ENCODE measurements at regions of chr1 and their contacts with region 1.

Region 1: DNA sequence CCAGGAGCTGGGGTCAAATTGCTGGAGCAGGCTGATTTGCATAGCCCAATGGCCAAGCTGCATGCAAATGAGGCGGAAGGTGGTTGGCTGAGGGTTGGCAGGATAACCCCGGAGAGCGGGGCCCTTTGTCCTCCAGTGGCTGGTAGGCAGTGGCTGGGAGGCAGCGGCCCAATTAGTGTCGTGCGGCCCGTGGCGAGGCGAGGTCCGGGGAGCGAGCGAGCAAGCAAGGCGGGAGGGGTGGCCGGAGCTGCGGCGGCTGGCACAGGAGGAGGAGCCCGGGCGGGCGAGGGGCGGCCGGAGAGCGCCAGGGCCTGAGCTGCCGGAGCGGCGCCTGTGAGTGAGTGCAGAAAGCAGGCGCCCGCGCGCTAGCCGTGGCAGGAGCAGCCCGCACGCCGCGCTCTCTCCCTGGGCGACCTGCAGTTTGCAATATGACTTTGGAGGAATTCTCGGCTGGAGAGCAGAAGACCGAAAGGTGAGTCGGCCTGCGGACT is at the start of gene GADD45A:
- DNase-seq: peak; percentile 90 to 99 (median 93)
- ATAC-seq: peak; percentile 80
- H3K4me3 ChIP-seq: peak within 1 kb of the TSS; percentile 93
- H3K27ac ChIP-seq: peak within 1 kb of the TSS; percentile 95
- H3K4me1 ChIP-seq: peaks cover 18 to 33% of the 10 kb centered on the region in 2 experiments; a peak in 4 of 5 replicates
- H3K27me3 ChIP-seq: no peaks in the 10 kb centered on the region
- CTCF ChIP-seq: no peak
- EP300 ChIP-seq: no peak; the same call in 1 of the 2 replicates
- POLR2A ChIP-seq: peak; percentile 99
- RAD21 ChIP-seq: peak in 1 of 2 experiments; percentile 24; a peak in 2 of 4 replicates
- polyA plus RNA-seq, gene GADD45A: 21.3 to 22.4 TPM

Region 2: GRCh38 chr1:66929999-66930822 is 754.9 kb before region 1 on chr1:
- CTCF ChIA-PET with region 1: no interaction called
- POLR2A ChIA-PET with region 1: no interaction called
- in situ Hi-C with region 1: no loop called
- intact Hi-C with region 1: loop called (anchors 5 kb)
- DNase-seq: peak; percentile 85 to 97 (median 90)
- ATAC-seq: peak; percentile 61
- H3K4me3 ChIP-seq: peak overlapping the region; percentile 85
- H3K27ac ChIP-seq: peak overlapping the region; percentile 89
- H3K4me1 ChIP-seq: peaks cover 8 to 11% of the 10 kb centered on the region in 2 experiments; a peak in 3 of 5 replicates
- H3K27me3 ChIP-seq: no peaks in the 10 kb centered on the region
- CTCF ChIP-seq: peak in 2 of 3 experiments; percentile 13 to 35; a peak in 3 of 6 replicates
- EP300 ChIP-seq: no peak
- POLR2A ChIP-seq: peak; percentile 82
- RAD21 ChIP-seq: no peak

Region 3: GRCh38 chr1:67540733-67541125 is 144.4 kb before region 1 on chr1:
- CTCF ChIA-PET with region 1: no interaction called
- POLR2A ChIA-PET with region 1: interaction called, 23 read pairs
- in situ Hi-C with region 1: no loop called
- intact Hi-C with region 1: loop called (anchors 1 kb)
- DNase-seq: no peak
- ATAC-seq: no peak
- H3K4me3 ChIP-seq: no peak overlapping the region
- H3K27ac ChIP-seq: no peak overlapping the region
- H3K4me1 ChIP-seq: peaks cover 12 to 14% of the 10 kb centered on the region in 2 experiments; a peak in 4 of 5 replicates
- H3K27me3 ChIP-seq: no peaks in the 10 kb centered on the region
- CTCF ChIP-seq: no peak
- EP300 ChIP-seq: no peak
- POLR2A ChIP-seq: no peak
- RAD21 ChIP-seq: no peak

Region 4: GRCh38 chr1:67646145-67647035 is 38.7 kb before region 1 on chr1:
- CTCF ChIA-PET with region 1: no interaction called
- POLR2A ChIA-PET with region 1: interaction called, 11 read pairs
- in situ Hi-C with region 1: no loop called
- intact Hi-C with region 1: loop called (anchors 2 kb)
- DNase-seq: peak; percentile 76 to 81 (median 80)
- ATAC-seq: peak; percentile 93
- H3K4me3 ChIP-seq: no peak overlapping the region
- H3K27ac ChIP-seq: peak overlapping the region; percentile 77
- H3K4me1 ChIP-seq: peaks cover 19 to 25% of the 10 kb centered on the region in 2 experiments
- H3K27me3 ChIP-seq: no peaks in the 10 kb centered on the region
- CTCF ChIP-seq: no peak
- EP300 ChIP-seq: peak; percentile 63
- POLR2A ChIP-seq: no peak
- RAD21 ChIP-seq: peak in 1 of 2 experiments; percentile 34; a peak in 2 of 4 replicates

Region 5: DNA sequence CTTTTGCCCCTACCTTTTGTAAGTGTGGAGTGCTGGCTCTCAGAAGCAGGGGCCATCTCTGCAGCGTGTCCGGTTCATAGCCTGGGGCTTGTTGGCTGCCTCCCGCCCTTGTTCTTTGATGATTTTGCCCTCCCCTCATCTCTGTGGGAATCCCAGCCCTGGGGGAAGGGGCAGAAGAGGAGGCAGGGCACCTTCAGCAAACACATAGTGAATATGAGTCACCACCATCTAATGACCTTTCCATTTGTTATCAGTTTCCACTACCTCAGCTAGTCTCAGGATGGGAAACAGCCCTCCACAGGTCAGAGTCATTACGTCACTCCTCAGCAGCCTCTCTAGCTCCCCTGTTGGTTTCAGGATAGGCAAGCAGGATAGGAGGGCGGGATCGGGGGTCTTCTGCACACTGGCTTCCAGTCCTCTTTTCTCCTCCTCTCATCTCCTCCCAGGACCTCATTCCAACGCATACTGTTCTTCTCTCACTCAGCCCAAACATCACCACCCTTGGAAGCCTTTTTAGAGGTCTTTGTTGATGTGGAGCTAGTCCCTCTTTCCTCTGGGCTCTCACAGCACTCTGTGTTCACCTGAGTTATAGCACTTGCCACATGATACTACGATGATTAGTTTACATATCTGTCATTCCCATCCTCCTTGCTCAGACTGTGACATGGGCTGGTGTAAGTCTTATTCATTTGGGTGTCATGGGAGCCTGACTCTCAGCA is 15.7 kb after region 1 on chr1:
- CTCF ChIA-PET with region 1: no interaction called
- POLR2A ChIA-PET with region 1: interaction called, 14 read pairs
- in situ Hi-C with region 1: no loop called
- intact Hi-C with region 1: no loop called
- DNase-seq: peak; percentile 79 to 93 (median 86)
- ATAC-seq: peak; percentile 94
- H3K4me3 ChIP-seq: no peak overlapping the region
- H3K27ac ChIP-seq: peak overlapping the region; percentile 77
- H3K4me1 ChIP-seq: peaks cover 15 to 30% of the 10 kb centered on the region in 2 experiments
- H3K27me3 ChIP-seq: no peaks in the 10 kb centered on the region
- CTCF ChIP-seq: peak; percentile 65 to 69 (median 65)
- EP300 ChIP-seq: peak; percentile 82
- POLR2A ChIP-seq: no peak
- RAD21 ChIP-seq: peak in 1 of 2 experiments; percentile 36; a peak in 2 of 4 replicates

Region 6: DNA sequence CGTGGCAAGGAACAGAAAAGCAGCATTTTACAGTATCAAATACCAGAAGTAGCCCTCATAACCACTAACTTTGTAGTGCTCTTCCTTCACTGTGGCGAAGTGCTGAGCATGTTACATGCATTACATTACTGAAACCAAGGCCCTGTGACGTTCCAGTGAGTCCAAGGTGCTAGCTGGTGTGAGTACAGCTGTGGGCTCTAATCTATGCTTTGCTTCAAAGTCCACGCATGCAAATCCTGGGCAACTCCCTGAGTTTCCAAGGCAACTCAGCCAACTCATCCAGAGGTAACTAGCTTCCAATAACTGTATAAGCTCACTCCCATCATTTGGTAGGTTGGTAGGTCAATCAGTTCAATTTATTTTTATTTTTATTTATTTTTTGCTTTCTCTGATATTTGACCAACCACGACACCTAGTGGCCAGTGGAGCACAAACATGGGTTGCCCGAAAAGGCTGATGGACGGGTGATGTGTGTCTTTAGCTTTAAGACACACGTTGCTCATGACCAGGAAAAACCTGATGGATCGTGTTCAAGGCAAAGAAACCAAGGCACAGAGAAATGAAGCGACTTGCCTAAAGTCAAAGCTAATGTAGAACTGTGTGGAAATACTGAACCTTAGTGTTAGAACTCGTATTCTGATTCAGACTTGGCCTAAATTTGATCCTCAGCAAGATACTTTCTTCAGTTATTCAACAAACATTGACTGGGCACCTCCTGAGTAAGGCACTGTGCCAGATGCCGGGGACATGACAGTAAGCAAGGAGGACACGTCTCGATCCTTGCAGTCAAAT is 75.1 kb after region 1 on chr1:
- CTCF ChIA-PET with region 1: no interaction called
- POLR2A ChIA-PET with region 1: interaction called, 52 read pairs
- in situ Hi-C with region 1: no loop called
- intact Hi-C with region 1: loop called (anchors 1 kb)
- DNase-seq: peak; percentile 75 to 84 (median 76)
- ATAC-seq: peak; percentile 89
- H3K4me3 ChIP-seq: no peak overlapping the region
- H3K27ac ChIP-seq: peak overlapping the region; percentile 52
- H3K4me1 ChIP-seq: peaks cover 3 to 18% of the 10 kb centered on the region in 2 experiments; a peak in 4 of 5 replicates
- H3K27me3 ChIP-seq: no peaks in the 10 kb centered on the region
- CTCF ChIP-seq: peak; percentile 76 to 92 (median 84)
- EP300 ChIP-seq: 0 out of 2 replicates have a peak, but pooled peaks have one; percentile 14
- POLR2A ChIP-seq: no peak
- RAD21 ChIP-seq: peak; percentile 90 to 98

Region 7: DNA sequence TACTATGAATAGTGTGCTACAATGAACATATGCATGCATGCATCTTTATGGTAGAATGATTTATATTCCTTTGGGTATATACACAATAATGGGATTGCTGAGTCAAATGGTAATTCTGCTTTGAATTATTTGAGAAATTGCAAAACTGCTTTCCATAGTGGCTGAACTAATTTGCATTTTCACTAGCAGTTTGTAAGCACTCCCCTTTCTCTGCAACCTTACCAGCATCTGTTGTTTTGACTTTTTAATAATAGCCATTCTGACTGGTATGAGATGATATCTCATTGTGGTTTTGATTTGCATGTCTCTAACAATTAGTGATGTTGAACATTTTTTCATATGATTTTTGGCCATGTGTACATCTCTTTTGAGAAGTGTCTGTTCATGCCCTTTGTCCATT is 389.4 kb after region 1 on chr1:
- CTCF ChIA-PET with region 1: no interaction called
- POLR2A ChIA-PET with region 1: no interaction called
- in situ Hi-C with region 1: no loop called
- intact Hi-C with region 1: no loop called
- DNase-seq: no peak
- ATAC-seq: no peak
- H3K4me3 ChIP-seq: no peak overlapping the region
- H3K27ac ChIP-seq: no peak overlapping the region
- H3K4me1 ChIP-seq: no peaks in the 10 kb centered on the region
- H3K27me3 ChIP-seq: no peaks in the 10 kb centered on the region
- CTCF ChIP-seq: no peak
- EP300 ChIP-seq: no peak
- POLR2A ChIP-seq: no peak
- RAD21 ChIP-seq: no peak

Measured in K562 (cell line).